Vagina (tissue), 2 donors: ENCODE measurements at regions of chr9 and their contacts with region 1.

Region 1: GRCh38 chr9:78831726-78832125 is 534.8 kb downstream of the PSAT1 start:
- DNase-seq: no peak
- H3K4me3 ChIP-seq: no peak overlapping the region
- H3K27ac ChIP-seq: no peak overlapping the region
- H3K4me1 ChIP-seq: no peaks in the 10 kb centered on the region
- H3K27me3 ChIP-seq: no peaks in the 10 kb centered on the region
- CTCF ChIP-seq: no peak
- POLR2A ChIP-seq: no peak

Region 2: GRCh38 chr9:78811622-78812276 is 20.0 kb before region 1 on chr9:
- intact Hi-C with region 1: no loop called
- DNase-seq: no peak
- H3K4me3 ChIP-seq: no peak overlapping the region
- H3K27ac ChIP-seq: no peak overlapping the region
- H3K4me1 ChIP-seq: no peaks in the 10 kb centered on the region
- H3K27me3 ChIP-seq: no peaks in the 10 kb centered on the region
- CTCF ChIP-seq: no peak
- POLR2A ChIP-seq: no peak

Region 3: DNA sequence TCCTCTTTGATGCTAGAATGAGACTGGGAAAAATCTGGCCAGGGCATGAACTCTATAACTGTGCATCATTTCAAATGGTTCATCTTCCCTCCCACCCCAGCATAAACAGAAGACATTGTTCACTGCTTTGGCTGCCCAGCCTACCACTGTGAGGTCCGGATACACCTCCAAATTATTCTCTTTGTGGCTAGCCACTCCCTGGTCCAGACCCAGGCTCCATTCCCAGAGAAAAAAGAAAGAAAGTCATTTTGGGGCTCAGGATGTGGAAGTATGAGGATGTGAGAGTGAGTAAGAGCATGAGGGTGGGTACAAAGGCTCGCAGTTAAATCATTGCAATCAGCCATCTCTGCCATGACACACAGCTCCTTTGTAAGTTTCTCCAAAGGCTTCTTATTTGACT is 24.4 kb after region 1 on chr9:
- intact Hi-C with region 1: no loop called
- DNase-seq: no peak
- H3K4me3 ChIP-seq: no peak overlapping the region
- H3K27ac ChIP-seq: no peak overlapping the region
- H3K4me1 ChIP-seq: no peaks in the 10 kb centered on the region
- H3K27me3 ChIP-seq: no peaks in the 10 kb centered on the region
- CTCF ChIP-seq: no peak
- POLR2A ChIP-seq: no peak

Region 4: GRCh38 chr9:79000230-79001002 is 168.7 kb after region 1 on chr9:
- intact Hi-C with region 1: loop called (anchors 5 kb)
- DNase-seq: no peak
- H3K4me3 ChIP-seq: no peak overlapping the region
- H3K27ac ChIP-seq: no peak overlapping the region
- H3K4me1 ChIP-seq: no peaks in the 10 kb centered on the region
- H3K27me3 ChIP-seq: no peaks in the 10 kb centered on the region
- CTCF ChIP-seq: no peak
- POLR2A ChIP-seq: no peak